Activated T-helper 2 cell treated with anti-CD3 and anti-CD28 coated beads, Interferon-gamma antibody, Interleukin-2, Interleukin-4, amounts not matched to agents 10 μg/mL and 5 μg/mL and 100 μg/mL, durations not matched to agents 14 hours and 24 hours and 36 hours (primary cell): ENCODE measurements at regions of chr2 and their contacts with region 1.

Region 1: GRCh38 chr2:7758073-7758759 is 841.0 kb downstream of the RNF144A start:
- DNase-seq: no peak
- H3K4me3 Mint-ChIP-seq: no peak overlapping the region
- H3K27ac Mint-ChIP-seq: peak overlapping the region; percentile 78
- H3K4me1 Mint-ChIP-seq: peaks cover 18% of the 10 kb centered on the region
- H3K27me3 Mint-ChIP-seq: no peaks in the 10 kb centered on the region

Region 2: DNA sequence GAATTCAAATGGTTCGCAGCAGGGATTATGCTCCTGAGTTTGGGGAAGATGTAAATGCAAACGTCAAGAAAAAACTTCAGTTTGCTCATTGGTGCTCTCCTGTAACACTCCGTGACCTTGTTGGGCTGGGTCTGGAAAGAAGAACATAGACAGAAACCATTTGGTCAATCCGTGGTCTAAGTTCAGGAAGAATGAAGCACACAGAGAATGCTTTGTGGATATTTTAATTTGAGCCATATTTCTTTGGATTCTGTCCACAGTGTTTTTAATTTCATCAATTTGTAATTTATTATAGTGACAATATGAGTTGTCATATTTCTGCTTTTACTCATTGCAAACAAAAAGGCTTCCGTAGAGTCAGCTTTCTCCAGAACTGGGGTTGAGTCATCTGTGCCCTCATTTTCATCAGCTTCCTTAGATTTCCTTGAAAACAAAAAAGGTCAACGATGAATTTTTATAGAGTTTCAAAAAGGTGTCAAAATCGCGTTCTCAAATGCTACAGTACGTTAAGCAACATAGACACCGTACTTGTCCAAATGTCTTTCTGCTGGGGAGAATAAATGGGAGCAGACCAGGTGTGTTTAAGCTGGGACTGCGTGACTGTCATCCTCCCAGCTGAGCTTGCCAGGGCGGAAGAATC is 234.6 kb before region 1 on chr2:
- intact Hi-C with region 1: loop called (anchors 2 kb)
- DNase-seq: no peak
- H3K4me3 Mint-ChIP-seq: peak overlapping the region; percentile 46
- H3K27ac Mint-ChIP-seq: peak overlapping the region; percentile 88
- H3K4me1 Mint-ChIP-seq: peaks cover 69% of the 10 kb centered on the region
- H3K27me3 Mint-ChIP-seq: no peaks in the 10 kb centered on the region

Region 3: DNA sequence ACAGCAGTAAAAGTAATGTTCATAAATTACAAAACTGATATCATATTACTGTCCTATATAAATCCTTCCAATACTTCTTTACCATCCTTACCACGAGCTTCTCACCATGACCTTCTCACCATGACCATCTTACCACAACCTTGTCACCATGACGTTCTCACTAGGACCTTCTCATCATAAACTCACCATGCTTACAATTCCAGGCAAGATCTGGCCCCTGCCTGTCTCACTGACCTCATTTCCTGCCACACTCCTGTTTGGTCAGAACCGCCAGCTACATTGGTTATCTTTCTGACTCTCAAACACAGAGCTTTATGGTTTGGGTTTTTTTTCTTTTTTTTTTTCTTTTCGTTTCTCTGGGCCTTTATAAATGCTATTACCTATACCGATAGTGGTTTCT is 13.4 kb before region 1 on chr2:
- intact Hi-C with region 1: loop called (anchors 2 kb)
- DNase-seq: no peak
- H3K4me3 Mint-ChIP-seq: no peak overlapping the region
- H3K27ac Mint-ChIP-seq: peak overlapping the region; percentile 84
- H3K4me1 Mint-ChIP-seq: peaks cover 26% of the 10 kb centered on the region
- H3K27me3 Mint-ChIP-seq: no peaks in the 10 kb centered on the region